Activated naive CD4-positive, alpha-beta T cell treated with anti-CD3 and anti-CD28 coated beads, Interleukin-2, amount 10 ng/mL, durations not matched to agents 7 days and 5 days (primary cell): ENCODE measurements at regions of chr2 and their contacts with region 1.

Region 1: DNA sequence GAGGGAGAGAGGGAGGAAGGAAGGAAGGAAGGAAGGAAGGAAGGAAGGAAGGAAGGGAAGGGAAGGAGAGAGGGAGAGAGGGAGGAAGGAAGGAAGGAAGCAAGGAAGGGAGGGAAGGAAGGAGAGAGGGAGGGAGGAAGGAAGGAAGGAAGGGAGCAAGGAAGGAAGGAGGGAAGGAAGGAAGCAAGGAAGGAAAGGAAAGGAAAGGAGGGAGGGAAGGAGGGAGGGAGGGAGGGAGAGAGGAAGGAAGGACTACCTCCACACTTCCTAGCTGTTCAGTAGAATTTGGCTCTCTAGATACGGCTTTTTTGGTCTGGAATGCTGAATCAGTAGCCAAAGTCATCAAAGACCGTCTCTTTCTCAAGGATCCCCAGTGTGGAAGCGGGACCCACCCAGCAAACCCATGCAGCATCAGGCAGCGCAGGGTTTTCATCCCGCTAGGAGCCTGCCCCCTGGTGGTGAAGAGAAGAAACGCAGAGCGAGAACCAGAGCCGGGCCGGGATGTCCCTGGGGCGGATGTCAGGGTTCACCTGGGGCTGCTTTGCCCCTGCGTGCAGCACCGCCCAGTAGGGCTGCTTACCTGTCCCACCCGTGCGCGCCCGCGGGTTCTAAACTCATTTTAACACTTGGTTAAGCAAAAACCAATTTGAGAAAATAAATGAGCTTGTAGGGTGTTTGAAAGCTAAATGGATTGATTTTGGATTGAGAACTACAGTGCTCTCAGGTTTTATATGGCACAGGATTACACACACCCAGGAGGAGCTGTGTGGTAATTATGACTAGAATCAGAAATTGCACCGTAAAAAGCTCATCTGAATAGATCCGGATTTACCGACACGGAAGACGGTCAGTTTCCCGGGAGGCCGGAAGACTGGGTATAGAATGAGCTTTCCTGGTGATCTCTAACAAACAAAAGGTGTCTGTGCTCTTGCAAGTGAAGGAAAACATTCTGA is 48.1 kb upstream of the ARL4C start:
- DNase-seq: peak; percentile 85
- H3K4me3 Mint-ChIP-seq: no peak overlapping the region
- H3K27ac Mint-ChIP-seq: no peak overlapping the region
- H3K4me1 Mint-ChIP-seq: peaks cover 11% of the 10 kb centered on the region
- H3K27me3 Mint-ChIP-seq: peaks cover 39% of the 10 kb centered on the region

Region 2: GRCh38 chr2:233974530-233975071 is 570.3 kb before region 1 on chr2:
- CTCF ChIA-PET with region 1: interaction called, 10 read pairs
- DNase-seq: no peak
- H3K4me3 Mint-ChIP-seq: no peak overlapping the region
- H3K27ac Mint-ChIP-seq: peak overlapping the region; percentile 24
- H3K4me1 Mint-ChIP-seq: peaks cover 24% of the 10 kb centered on the region
- H3K27me3 Mint-ChIP-seq: peaks cover 20% of the 10 kb centered on the region

Region 3: DNA sequence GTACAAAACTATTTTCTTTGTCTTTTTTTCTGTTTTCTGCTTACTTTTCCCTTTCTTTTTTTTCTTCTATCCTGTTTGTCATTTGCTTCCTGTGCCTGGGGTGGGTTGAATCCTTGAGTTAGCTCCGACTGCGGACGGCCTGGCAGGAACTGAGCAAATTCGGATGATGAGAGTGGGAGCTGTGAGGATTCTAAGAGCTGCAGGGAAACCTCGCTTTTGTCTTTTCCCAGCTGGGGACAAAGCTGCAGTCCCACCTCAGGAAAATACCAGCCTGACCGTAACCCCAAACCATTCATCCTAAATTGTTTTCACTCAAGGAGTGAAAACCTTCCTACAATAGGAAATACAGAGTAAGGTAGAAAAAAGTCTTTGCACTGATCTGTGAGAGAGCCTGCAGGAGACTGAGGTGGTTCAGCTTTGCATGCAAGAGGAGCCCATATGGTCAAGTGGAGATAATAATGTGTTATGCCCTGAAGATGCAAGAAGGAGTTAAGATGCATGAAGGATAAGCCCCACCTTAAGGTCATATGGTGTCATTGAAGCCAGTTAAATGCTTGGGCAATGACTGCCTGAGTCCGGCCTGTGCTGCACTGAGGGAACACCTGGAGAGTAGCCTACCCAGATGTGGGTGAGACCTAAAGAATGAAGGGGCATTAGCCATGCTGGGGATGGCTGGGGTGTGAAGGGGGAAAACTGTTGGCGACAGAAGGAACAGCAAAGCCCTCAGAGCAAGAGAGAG is 16.4 kb before region 1 on chr2:
- CTCF ChIA-PET with region 1: interaction called, 10 read pairs
- DNase-seq: no peak
- H3K4me3 Mint-ChIP-seq: no peak overlapping the region
- H3K27ac Mint-ChIP-seq: no peak overlapping the region
- H3K4me1 Mint-ChIP-seq: no peaks in the 10 kb centered on the region
- H3K27me3 Mint-ChIP-seq: peaks cover 48% of the 10 kb centered on the region

Region 4: DNA sequence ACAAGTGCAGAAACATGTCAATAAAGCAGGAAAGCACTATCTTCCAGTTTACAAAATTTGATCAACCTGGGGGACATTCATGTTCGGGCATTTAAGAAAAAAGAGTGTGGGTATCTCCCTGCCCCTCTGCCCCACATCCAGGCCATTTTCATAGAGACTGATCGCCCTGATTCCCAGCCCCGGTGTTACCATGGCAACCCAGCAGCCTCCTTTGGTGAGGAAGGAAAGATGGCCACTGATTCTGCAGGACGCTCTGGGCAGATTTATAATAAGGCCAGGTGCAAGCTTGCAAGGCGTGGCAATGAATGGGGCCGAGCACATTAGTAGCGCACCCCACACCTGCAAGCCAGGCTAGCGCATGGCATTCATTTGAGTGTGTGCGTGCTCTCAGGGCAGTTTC is 11.3 kb before region 1 on chr2:
- CTCF ChIA-PET with region 1: interaction called, 17 read pairs
- DNase-seq: no peak
- H3K4me3 Mint-ChIP-seq: no peak overlapping the region
- H3K27ac Mint-ChIP-seq: no peak overlapping the region
- H3K4me1 Mint-ChIP-seq: peaks cover 4% of the 10 kb centered on the region
- H3K27me3 Mint-ChIP-seq: peaks cover 30% of the 10 kb centered on the region

Region 5: DNA sequence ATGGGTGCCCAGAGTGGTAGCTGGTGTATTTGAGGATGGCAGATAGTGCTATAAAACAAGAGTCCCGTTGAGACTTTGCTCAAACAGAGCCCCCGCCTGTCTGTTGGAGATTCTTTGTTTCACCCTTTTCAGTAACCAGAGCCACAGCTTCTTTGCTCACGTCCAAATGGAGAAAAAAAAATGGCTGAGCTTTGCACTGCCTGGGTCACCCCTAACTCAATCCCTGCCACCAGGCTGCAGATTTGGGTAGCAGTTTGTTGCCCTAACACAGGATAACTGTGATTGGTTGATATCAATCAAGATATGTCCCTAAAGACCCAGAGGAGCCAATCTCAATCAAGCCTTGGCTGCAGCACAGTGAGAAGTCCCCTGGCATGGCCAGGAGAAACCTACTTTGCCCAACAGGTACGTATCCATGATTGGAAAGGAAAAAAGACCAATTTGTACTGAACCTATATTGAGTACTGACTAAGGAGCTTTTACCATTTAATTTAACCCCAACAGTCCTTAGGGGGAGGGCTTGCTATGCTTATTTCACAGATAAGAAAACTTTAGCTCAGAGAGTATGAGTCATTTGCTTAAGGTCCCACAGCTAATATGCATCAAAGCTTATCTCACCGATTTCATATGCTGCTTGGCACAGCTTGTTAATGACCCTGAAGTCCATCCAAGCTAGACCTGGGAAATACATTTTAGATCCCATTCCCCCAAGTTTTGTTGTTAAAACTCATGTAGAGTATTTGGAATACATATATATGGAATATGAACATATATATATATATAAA is 334.9 kb after region 1 on chr2:
- CTCF ChIA-PET with region 1: no interaction called
- DNase-seq: no peak
- H3K4me3 Mint-ChIP-seq: no peak overlapping the region
- H3K27ac Mint-ChIP-seq: no peak overlapping the region
- H3K4me1 Mint-ChIP-seq: no peaks in the 10 kb centered on the region
- H3K27me3 Mint-ChIP-seq: peaks cover 8% of the 10 kb centered on the region